BJ (cell line): ENCODE measurements at regions of chr6 and their contacts with region 1.

Region 1: DNA sequence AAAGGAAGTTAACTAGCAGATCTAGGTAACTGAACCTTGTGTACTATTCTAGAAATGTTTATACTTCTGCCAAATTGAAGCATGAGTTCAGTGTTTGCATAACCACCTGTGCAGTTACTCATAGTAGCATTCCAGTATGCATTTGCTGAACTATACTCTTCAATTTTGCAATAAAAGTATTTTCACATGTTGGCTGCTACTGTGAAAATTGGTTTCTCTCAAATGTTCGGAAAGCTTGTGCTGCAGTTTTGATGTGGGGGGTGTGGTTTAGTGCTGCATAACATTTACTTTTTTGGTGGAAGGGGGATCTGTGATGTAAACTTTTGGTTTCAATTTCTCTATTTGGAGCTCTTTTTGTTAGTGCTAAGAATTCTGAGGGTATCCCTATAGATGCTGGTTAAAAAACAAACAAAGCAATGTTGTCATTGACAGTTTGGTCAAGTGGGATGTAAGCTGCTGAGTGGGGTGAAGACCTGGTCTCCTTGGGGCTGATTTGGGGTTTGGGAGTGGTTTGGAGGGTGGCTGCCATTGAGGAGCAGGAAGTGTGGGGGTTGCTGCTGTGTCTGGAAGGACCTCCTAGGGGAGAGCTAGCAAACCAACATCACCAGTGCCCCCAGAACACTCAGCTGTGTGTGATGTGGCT is 87.8 kb downstream of the CARMIL1 start:
- DNase-seq: no peak
- H3K4me3 ChIP-seq: no peak overlapping the region
- H3K27me3 ChIP-seq: no peaks in the 10 kb centered on the region
- CTCF ChIP-seq: no peak

Region 2: DNA sequence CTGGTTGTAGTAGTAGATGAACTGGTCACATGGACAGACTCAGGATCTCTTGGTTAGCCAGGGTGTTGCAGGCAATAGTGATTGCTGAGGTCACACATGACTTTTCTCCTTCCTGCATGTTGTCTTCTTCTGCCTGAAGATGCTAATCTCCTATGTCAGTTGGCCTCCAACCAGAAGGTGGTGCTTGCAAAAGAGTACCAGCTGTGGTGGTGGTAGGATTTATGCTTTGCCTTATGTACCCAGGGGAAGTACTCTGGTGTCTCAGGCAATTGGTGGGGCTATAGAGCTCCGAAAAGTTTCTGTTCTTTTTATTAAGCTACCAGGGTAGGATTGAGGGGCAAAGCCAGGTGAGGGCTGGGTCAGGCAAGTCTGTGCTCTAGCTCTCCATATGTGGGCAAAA is 10.6 kb after region 1 on chr6:
- CTCF ChIA-PET with region 1: interaction called, 12 read pairs
- POLR2A ChIA-PET with region 1: no interaction called
- DNase-seq: no peak
- H3K4me3 ChIP-seq: no peak overlapping the region
- H3K27me3 ChIP-seq: no peaks in the 10 kb centered on the region
- CTCF ChIP-seq: no peak

Region 3: GRCh38 chr6:25404693-25405169 is 37.7 kb after region 1 on chr6:
- CTCF ChIA-PET with region 1: no interaction called
- POLR2A ChIA-PET with region 1: no interaction called
- DNase-seq: no peak
- H3K4me3 ChIP-seq: no peak overlapping the region
- H3K27me3 ChIP-seq: no peaks in the 10 kb centered on the region
- CTCF ChIP-seq: no peak